ENCODE measurements at regions of chr1 and their contacts with region 1.

Region 1: GRCh38 chr1:244835276-244836134 is at the start of gene COX20:
- DNase-seq: peak; percentile 79 to 95 (median 87)
- ATAC-seq: peak; percentile 55
- H3K4me3 ChIP-seq: peak within 1 kb of the TSS; percentile 87
- H3K4me3 Mint-ChIP-seq: peak within 1 kb of the TSS; percentile 98
- H3K27ac ChIP-seq: peak within 1 kb of the TSS; percentile 97 to 98
- H3K27ac Mint-ChIP-seq: peak within 1 kb of the TSS; percentile 99
- H3K4me1 ChIP-seq: peaks cover 18% of the 10 kb centered on the region
- H3K4me1 Mint-ChIP-seq: peaks cover 53% of the 10 kb centered on the region
- H3K27me3 ChIP-seq: no peaks in the 10 kb centered on the region
- H3K27me3 Mint-ChIP-seq: no peaks in the 10 kb centered on the region
- CTCF ChIP-seq: no peak
- total RNA-seq, gene COX20: 14.5 to 16.8 TPM

Region 2: DNA sequence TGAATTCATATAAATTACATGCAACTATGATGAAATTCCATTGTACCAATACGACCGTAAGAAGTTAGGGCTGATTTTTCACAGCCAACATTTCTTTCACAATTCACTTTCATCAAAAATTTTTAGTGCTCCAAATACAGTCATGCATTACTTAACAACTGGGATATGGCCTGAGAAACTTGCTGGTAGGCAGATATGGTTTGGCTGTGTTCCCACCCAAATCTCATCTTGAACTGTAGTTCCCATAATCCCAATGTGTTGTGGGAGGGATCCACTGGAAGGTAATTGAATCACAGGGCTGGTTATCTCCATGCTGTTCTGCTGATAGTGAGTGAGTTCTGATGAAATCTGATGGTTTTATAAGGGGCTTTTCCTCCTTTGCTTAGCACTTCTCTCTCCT is 1229.9 kb before region 1 on chr1:
- CTCF ChIA-PET with region 1: no interaction called
- POLR2A ChIA-PET with region 1: no interaction called
- intact Hi-C with region 1: loop called in 1 of 2 experiments (anchors 10 kb)
- DNase-seq: no peak
- ATAC-seq: no peak
- H3K4me3 ChIP-seq: no peak overlapping the region
- H3K4me3 Mint-ChIP-seq: no peak overlapping the region
- H3K27ac ChIP-seq: no peak overlapping the region
- H3K27ac Mint-ChIP-seq: no peak overlapping the region
- H3K4me1 ChIP-seq: no peaks in the 10 kb centered on the region
- H3K4me1 Mint-ChIP-seq: no peaks in the 10 kb centered on the region
- H3K27me3 ChIP-seq: no peaks in the 10 kb centered on the region
- H3K27me3 Mint-ChIP-seq: no peaks in the 10 kb centered on the region
- CTCF ChIP-seq: no peak

Region 3: DNA sequence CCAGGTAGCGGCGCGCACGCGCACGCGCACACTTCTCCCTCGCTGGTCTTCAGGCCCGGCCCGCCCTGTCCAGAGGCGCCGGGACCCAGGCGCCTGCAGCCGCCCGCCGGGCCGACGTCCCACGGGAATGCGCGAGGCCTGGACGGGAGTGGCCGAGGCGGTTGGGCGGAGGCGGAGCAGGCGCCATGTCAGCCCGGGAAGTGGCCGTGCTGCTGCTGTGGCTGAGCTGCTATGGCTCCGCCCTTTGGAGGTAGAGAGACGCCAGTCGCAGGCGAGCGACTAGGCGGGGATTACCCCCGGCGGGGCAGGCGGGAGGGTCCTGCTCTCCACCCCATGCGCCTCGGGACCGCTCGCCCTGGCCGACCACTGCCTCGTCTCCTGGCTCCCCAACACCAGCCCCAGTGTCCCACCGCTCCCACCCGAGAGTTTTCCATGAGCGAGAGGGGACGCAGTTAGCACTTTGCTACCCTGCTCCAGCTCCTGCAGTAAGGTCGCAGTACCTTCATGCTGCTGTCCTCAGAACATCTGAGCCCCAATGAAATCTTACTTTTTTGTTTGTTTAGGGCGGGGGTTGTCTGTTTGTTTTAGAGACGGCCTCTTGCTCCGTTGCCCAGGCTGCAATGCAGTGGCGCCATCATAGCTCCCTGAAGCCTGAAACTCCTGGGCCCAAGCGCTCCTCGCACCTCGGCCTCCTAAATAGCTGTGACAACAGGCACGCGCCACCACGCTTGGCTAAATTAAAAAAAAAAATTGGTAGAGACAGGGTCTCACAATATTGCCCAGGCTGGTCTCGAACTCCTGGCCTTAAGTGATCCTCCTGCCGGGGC is 374.0 kb before region 1 on chr1 and contains the start of gene CATSPERE:
- CTCF ChIA-PET with region 1: no interaction called
- POLR2A ChIA-PET with region 1: interaction called, 17 read pairs
- intact Hi-C with region 1: loop called (anchors 5 to 10 kb)
- DNase-seq: peak; percentile 53 to 88 (median 70)
- ATAC-seq: peak; percentile 98
- H3K4me3 ChIP-seq: peak within 1 kb of the TSS; percentile 72
- H3K4me3 Mint-ChIP-seq: peak within 1 kb of the TSS; percentile 82
- H3K27ac ChIP-seq: peak within 1 kb of the TSS; percentile 77
- H3K27ac Mint-ChIP-seq: peak within 1 kb of the TSS; percentile 76
- H3K4me1 ChIP-seq: peaks cover 18% of the 10 kb centered on the region
- H3K4me1 Mint-ChIP-seq: peaks cover 12% of the 10 kb centered on the region
- H3K27me3 ChIP-seq: no peaks in the 10 kb centered on the region
- H3K27me3 Mint-ChIP-seq: no peaks in the 10 kb centered on the region
- CTCF ChIP-seq: no peak
- total RNA-seq, gene CATSPERE: 0.91 to 1.4 TPM

Region 4: GRCh38 chr1:244801246-244801645 is 34.3 kb before region 1 on chr1:
- CTCF ChIA-PET with region 1: interaction called, 10 read pairs
- POLR2A ChIA-PET with region 1: interaction called, 19 read pairs
- intact Hi-C with region 1: loop called in 1 of 2 experiments (anchors 2 kb)
- DNase-seq: peak; percentile 23 to 81 (median 46)
- ATAC-seq: peak; percentile 91
- H3K4me3 ChIP-seq: no peak overlapping the region
- H3K4me3 Mint-ChIP-seq: no peak overlapping the region
- H3K27ac ChIP-seq: no peak overlapping the region
- H3K27ac Mint-ChIP-seq: no peak overlapping the region
- H3K4me1 ChIP-seq: peaks cover 3% of the 10 kb centered on the region
- H3K4me1 Mint-ChIP-seq: peaks cover 4% of the 10 kb centered on the region
- H3K27me3 ChIP-seq: no peaks in the 10 kb centered on the region
- H3K27me3 Mint-ChIP-seq: peaks cover 4% of the 10 kb centered on the region
- CTCF ChIP-seq: peak; percentile 83

Region 5: GRCh38 chr1:244864253-244865027 is 28.9 kb after region 1 on chr1 and contains the start of gene HNRNPU:
- CTCF ChIA-PET with region 1: interaction called, 63 read pairs
- POLR2A ChIA-PET with region 1: interaction called, 1,262 read pairs
- intact Hi-C with region 1: loop called (anchors 1 kb)
- DNase-seq: peak; percentile 90 to 99 (median 96)
- ATAC-seq: peak; percentile 62
- H3K4me3 ChIP-seq: peak within 1 kb of the TSS; percentile 91
- H3K4me3 Mint-ChIP-seq: peak within 1 kb of the TSS; percentile 96
- H3K27ac ChIP-seq: peak within 1 kb of the TSS; percentile 98 to 99
- H3K27ac Mint-ChIP-seq: peak within 1 kb of the TSS; percentile 98
- H3K4me1 ChIP-seq: peaks cover 24% of the 10 kb centered on the region
- H3K4me1 Mint-ChIP-seq: peaks cover 53% of the 10 kb centered on the region
- H3K27me3 ChIP-seq: no peaks in the 10 kb centered on the region
- H3K27me3 Mint-ChIP-seq: peaks cover 5% of the 10 kb centered on the region
- CTCF ChIP-seq: peak; percentile 30
- total RNA-seq, gene HNRNPU: 415 TPM

Region 6: DNA sequence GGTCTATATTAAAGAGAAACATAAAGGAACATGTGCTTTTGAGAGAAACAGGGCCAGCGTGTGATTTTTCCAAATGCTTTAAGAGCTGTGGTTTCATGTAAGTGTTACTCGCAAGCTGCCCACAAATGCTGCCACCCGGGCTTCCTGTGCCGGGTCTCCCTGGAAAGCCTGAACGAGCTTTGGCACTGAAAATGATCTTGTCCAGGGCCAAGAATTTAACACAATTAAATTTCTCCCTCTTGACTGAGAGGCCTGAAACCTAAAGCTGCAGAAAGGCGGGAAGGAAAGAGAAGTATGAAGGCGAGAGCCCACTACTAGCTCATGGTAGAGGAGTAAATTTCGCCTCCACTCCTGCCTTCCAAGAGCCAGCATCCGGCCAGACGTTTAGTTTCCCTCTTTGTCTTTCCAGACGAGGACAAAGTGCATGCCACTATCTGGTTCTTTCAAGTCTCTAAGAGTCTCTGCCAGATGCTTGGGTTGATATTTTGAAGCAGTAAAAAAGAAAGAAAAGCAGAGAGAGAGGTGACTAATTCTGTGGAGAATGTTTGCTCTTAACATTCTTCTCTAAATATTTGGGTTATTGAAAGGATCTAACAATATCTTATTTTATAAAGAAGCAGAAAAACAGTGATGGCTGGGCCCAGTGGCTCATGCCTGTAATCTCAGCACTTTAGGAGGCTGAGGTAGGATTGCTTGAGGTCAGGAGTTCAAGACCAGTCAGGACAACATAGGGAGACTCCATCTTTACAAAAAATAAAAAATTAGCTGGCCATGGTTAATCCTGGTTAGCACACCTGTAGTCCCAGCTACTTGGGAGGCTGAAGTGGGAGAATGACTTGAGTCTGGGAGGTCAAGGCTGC is 128.8 kb after region 1 on chr1:
- CTCF ChIA-PET with region 1: interaction called, 4 read pairs
- POLR2A ChIA-PET with region 1: interaction called, 274 read pairs
- intact Hi-C with region 1: loop called in 1 of 2 experiments (anchors 1 kb)
- DNase-seq: peak in 5 of 14 experiments; percentile 12 to 48 (median 20)
- ATAC-seq: no peak
- H3K4me3 ChIP-seq: no peak overlapping the region
- H3K4me3 Mint-ChIP-seq: no peak overlapping the region
- H3K27ac ChIP-seq: no peak overlapping the region
- H3K27ac Mint-ChIP-seq: no peak overlapping the region
- H3K4me1 ChIP-seq: peaks cover 8% of the 10 kb centered on the region
- H3K4me1 Mint-ChIP-seq: peaks cover 27% of the 10 kb centered on the region
- H3K27me3 ChIP-seq: no peaks in the 10 kb centered on the region
- H3K27me3 Mint-ChIP-seq: no peaks in the 10 kb centered on the region
- CTCF ChIP-seq: no peak

Region 7: DNA sequence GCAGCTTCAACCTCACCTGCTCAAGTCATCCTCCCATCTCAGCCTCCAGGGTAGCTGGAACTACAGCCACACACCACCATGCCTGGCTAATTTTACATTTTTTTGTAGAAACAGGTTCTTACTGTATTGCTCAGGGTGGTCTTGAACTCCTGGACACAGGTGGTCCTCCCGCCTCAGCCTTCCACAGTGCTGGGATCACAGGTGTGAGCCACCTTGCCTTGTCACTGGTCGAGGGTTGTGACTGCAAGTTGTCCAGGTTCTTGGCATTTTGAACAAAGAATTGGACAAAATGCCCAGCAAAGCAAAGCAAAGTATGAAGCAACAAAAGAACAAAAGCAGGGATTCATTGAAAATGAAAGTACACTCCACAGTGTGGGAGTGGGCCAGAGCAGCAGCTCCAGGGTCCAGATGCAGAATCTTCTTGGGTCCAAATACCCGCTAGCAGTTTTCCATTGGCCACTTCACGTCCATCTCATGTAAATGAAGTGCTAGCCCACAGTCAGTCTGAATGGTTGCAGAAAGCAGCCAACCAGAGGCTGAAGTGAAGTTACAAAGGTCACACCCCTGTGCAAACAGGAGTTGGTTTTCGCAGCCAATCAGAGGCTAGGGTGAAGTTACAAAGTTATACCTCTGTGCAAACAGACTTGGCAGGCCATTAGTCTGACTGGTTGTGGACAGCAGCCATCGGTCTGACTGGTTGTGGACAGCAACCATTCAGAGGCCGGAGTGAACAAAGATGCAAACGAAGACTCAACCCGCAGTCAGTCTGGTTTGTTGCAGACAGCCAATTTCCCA is 209.8 kb after region 1 on chr1:
- CTCF ChIA-PET with region 1: interaction called, 23 read pairs
- POLR2A ChIA-PET with region 1: interaction called, 22 read pairs
- intact Hi-C with region 1: no loop called
- DNase-seq: no peak
- ATAC-seq: no peak
- H3K4me3 ChIP-seq: no peak overlapping the region
- H3K4me3 Mint-ChIP-seq: no peak overlapping the region
- H3K27ac ChIP-seq: no peak overlapping the region
- H3K27ac Mint-ChIP-seq: no peak overlapping the region
- H3K4me1 ChIP-seq: no peaks in the 10 kb centered on the region
- H3K4me1 Mint-ChIP-seq: no peaks in the 10 kb centered on the region
- H3K27me3 ChIP-seq: no peaks in the 10 kb centered on the region
- H3K27me3 Mint-ChIP-seq: no peaks in the 10 kb centered on the region
- CTCF ChIP-seq: no peak

Measured in CD4-positive, alpha-beta T cell (primary cell).